BJ (cell line): ENCODE measurements at regions of chr12 and their contacts with region 1.

Region 1: GRCh38 chr12:49130151-49131050 is 794 bp downstream of the TUBA1B start:
- DNase-seq: peak; percentile 70
- H3K4me3 ChIP-seq: peak overlapping the region; percentile 100
- H3K27me3 ChIP-seq: no peaks in the 10 kb centered on the region
- CTCF ChIP-seq: peak; percentile 96

Region 2: GRCh38 chr12:49079793-49080192 is 50.6 kb before region 1 on chr12:
- CTCF ChIA-PET with region 1: interaction called, 4 read pairs
- POLR2A ChIA-PET with region 1: interaction called, 15 read pairs
- DNase-seq: no peak
- H3K4me3 ChIP-seq: no peak overlapping the region
- H3K27me3 ChIP-seq: peaks cover 8% of the 10 kb centered on the region
- CTCF ChIP-seq: no peak

Region 3: GRCh38 chr12:49098035-49098451 is 32.4 kb before region 1 on chr12:
- CTCF ChIA-PET with region 1: interaction called, 16 read pairs
- POLR2A ChIA-PET with region 1: interaction called, 3 read pairs
- DNase-seq: no peak
- H3K4me3 ChIP-seq: no peak overlapping the region
- H3K27me3 ChIP-seq: peaks cover 8% of the 10 kb centered on the region
- CTCF ChIP-seq: peak; percentile 85

Region 4: GRCh38 chr12:49188914-49189367 is 58.5 kb after region 1 on chr12 and contains the start of gene TUBA1A:
- CTCF ChIA-PET with region 1: interaction called, 6 read pairs
- POLR2A ChIA-PET with region 1: interaction called, 14 read pairs
- DNase-seq: peak; percentile 98
- H3K4me3 ChIP-seq: peak within 1 kb of the TSS; percentile 97
- H3K27me3 ChIP-seq: no peaks in the 10 kb centered on the region
- CTCF ChIP-seq: no peak
- polyA plus RNA-seq, gene TUBA1A: 616 and 820 TPM in 2 replicates

Region 5: GRCh38 chr12:49244176-49244575 is 113.8 kb after region 1 on chr12:
- CTCF ChIA-PET with region 1: interaction called, 7 read pairs
- POLR2A ChIA-PET with region 1: interaction called, 24 read pairs
- DNase-seq: peak; percentile 73
- H3K4me3 ChIP-seq: no peak overlapping the region
- H3K27me3 ChIP-seq: no peaks in the 10 kb centered on the region
- CTCF ChIP-seq: no peak

Region 6: DNA sequence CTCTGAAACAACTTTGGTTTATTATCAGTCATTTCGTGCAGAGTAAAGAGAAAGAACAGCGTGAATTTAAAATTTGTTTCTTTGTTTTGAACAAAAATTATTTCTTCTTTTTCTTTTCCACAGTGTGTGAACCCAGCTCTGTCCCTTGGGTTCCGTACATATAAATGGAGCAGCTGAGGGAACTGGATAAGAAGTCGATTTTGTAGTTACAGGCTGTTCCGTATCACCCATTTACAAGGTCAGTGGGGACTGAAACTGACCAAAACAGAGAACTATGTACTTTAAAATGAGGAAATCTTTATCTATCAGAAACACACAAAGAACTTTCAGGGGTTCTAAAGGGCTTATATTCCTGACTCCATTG is 125.9 kb after region 1 on chr12:
- CTCF ChIA-PET with region 1: no interaction called
- POLR2A ChIA-PET with region 1: no interaction called
- DNase-seq: no peak
- H3K4me3 ChIP-seq: no peak overlapping the region
- H3K27me3 ChIP-seq: no peaks in the 10 kb centered on the region
- CTCF ChIP-seq: no peak